ENCODE measurements at regions of chr6 and their contacts with region 1.

Region 1: GRCh38 chr6:56843573-56844349 is 111.1 kb upstream of the BEND6 start:
- DNase-seq: peak in 1 of 2 donors; percentile 86
- H3K4me3 ChIP-seq: peak overlapping the region; percentile 75 to 90
- H3K27ac ChIP-seq: peak overlapping the region; percentile 87 to 93
- H3K4me1 ChIP-seq: peaks cover 0 to 9% of the 10 kb centered on the region in 2 donors
- H3K27me3 ChIP-seq: no peaks in the 10 kb centered on the region
- CTCF ChIP-seq: peak; percentile 51 to 84 (median 71)

Region 2: DNA sequence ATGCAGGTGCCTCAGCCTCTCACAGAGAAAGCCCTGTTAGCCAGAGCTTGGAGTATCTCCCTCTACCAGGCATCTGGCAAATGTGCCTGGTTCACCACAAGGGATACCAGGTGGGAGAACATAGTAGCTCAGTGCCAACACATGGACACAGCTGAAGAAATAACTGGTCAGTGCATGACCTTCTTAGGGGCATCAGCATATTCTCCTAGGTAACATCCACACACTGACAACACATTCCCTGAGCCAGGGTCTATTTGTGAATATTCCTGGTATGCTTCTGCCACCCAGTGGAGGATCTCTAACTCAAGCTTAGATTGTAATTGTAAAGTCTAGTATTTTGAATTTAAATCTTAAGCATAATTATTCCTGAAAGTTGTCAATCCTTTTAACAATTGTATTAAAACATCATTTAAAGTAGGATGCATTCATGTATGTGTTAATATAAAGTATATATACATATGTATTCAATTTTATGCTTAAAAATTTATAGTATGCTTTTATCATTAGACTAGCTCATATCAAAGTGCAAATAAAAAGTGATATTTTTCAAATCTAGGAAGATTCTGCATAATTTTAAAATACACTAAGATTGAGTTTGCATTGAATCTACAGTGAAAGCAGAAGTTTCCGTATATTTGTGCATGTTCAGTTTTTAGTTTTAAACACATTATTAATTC is 551.1 kb before region 1 on chr6:
- intact Hi-C with region 1: no loop called
- DNase-seq: no peak
- H3K4me3 ChIP-seq: no peak overlapping the region
- H3K27ac ChIP-seq: no peak overlapping the region
- H3K4me1 ChIP-seq: peaks cover 0 to 6% of the 10 kb centered on the region in 2 donors
- H3K27me3 ChIP-seq: no peaks in the 10 kb centered on the region
- CTCF ChIP-seq: peak; percentile 58 to 74 (median 62)

Region 3: GRCh38 chr6:56570413-56571359 is 273.1 kb before region 1 on chr6:
- intact Hi-C with region 1: no loop called
- DNase-seq: no peak
- H3K4me3 ChIP-seq: no peak overlapping the region
- H3K27ac ChIP-seq: no peak overlapping the region
- H3K4me1 ChIP-seq: peaks cover 0 to 5% of the 10 kb centered on the region in 2 donors
- H3K27me3 ChIP-seq: no peaks in the 10 kb centered on the region
- CTCF ChIP-seq: peak; percentile 24 to 64 (median 52)

Region 4: DNA sequence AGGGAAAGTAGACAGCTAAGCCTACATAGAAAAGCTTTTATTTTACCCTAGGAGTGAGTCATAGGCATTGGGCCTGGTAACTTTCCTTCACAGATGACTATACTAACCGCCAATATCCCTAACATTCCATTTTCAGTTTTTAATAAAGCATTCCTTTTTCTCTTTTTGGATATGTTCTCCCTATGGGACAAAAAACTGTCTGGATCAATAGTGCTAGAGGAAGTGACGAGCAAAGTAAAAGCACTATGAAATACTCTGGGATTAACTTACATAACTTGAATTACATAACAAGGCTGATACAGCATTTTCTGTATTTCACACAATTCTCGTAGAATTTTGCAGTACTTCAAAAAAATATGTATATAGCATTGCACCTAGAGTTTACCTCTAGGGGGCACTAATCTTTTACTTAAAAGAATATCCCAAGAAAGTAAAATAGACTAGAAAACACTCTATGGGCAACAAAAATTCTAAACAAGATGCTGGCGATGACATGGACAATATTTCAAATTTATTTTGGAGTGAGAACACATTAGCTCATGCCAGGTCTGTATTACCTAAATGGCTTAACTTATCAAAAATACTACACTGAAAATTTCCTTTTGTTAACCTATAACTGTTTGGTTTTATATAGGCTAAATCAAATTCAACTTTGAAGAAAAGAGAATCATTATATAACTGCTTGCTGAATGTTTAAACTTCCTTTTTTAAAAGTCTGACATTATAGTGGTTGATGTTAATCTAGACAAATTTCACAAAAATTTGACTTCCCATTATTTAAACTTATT is 134.8 kb before region 1 on chr6:
- intact Hi-C with region 1: loop called (anchors 5 kb)
- DNase-seq: no peak
- H3K4me3 ChIP-seq: peak overlapping the region in 1 of 2 donors; percentile 16
- H3K27ac ChIP-seq: peak overlapping the region; percentile 53 to 69
- H3K4me1 ChIP-seq: peaks cover 9 to 11% of the 10 kb centered on the region in 2 donors
- H3K27me3 ChIP-seq: no peaks in the 10 kb centered on the region
- CTCF ChIP-seq: peak; percentile 20 to 56 (median 44)

Region 5: GRCh38 chr6:56772737-56773184 is 71.0 kb before region 1 on chr6:
- intact Hi-C with region 1: loop called (anchors 5 kb)
- DNase-seq: peak; percentile 26 to 82
- H3K4me3 ChIP-seq: no peak overlapping the region
- H3K27ac ChIP-seq: peak overlapping the region; percentile 43 to 68
- H3K4me1 ChIP-seq: peaks cover 6 to 31% of the 10 kb centered on the region in 2 donors
- H3K27me3 ChIP-seq: no peaks in the 10 kb centered on the region
- CTCF ChIP-seq: peak in 2 of 3 experiments; percentile 9 to 12

Region 6: DNA sequence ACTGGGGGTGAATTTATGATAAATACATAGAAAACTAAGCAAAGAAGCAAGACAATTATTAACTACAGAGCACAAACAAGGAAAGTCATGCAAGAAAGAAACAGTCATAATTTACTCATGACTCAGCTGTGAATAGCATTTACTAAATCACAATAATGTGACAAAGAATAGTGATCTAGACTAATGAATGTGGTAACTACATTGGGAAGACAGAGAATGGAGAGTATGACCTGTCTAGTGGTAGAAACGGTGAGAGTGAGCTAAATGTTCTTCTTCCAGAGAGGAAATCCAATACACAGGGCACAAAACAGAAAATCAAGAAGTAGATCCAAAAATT is 47.6 kb before region 1 on chr6:
- intact Hi-C with region 1: loop called (anchors 5 kb)
- DNase-seq: no peak
- H3K4me3 ChIP-seq: no peak overlapping the region
- H3K27ac ChIP-seq: no peak overlapping the region
- H3K4me1 ChIP-seq: peaks cover 0 to 32% of the 10 kb centered on the region in 2 donors
- H3K27me3 ChIP-seq: no peaks in the 10 kb centered on the region
- CTCF ChIP-seq: no peak

Region 7: DNA sequence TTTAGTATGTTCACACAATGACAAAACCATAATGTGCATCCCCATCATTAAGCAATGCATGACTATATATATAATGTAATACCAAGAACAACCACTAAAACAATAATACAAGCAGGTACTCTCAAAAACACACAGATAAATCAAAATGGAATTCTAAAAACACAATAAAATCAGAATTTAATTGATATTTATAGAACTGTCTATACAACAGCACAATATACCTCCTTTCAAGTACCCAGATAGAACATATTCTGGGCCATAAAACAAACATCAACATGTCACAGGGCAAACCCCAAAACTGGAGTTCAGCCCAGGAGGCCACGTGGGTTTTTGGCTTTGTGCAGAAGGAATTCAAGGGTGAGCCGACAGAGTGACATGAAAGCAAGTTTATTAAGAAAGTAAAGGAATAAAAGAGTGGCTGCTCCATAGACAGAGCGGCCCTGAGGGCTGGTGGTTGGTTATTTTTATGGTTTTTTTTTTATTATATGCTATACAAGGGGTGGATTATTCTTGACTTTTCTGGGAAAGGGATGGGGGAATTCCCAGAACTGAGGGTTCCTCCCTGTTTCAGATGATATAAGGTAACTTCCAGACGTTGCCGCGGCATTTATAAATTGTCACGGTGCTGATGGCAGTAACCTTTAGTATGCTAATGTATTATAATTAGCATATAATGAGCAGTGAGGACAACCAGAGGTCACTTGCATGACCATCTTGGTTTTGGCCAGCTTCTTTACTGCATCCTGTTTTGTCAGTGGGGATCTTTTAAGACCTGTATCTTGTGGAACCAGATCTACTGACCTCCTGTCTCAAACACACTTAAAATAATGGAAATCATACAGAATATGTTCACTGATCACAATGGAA is 372.7 kb after region 1 on chr6:
- intact Hi-C with region 1: no loop called
- DNase-seq: no peak
- H3K4me3 ChIP-seq: no peak overlapping the region
- H3K27ac ChIP-seq: no peak overlapping the region
- H3K4me1 ChIP-seq: no peaks in the 10 kb centered on the region
- H3K27me3 ChIP-seq: no peaks in the 10 kb centered on the region
- CTCF ChIP-seq: no peak